GM12878 (cell line): ENCODE measurements at regions of chr6 and their contacts with region 1.

Region 1: GRCh38 chr6:80637312-80637711 is 530.8 kb downstream of the BCKDHB start:
- DNase-seq: no peak
- ATAC-seq: no peak
- H3K4me3 ChIP-seq: no peak overlapping the region
- H3K27ac ChIP-seq: no peak overlapping the region
- H3K4me1 ChIP-seq: no peaks in the 10 kb centered on the region
- H3K27me3 ChIP-seq: no peaks in the 10 kb centered on the region
- CTCF ChIP-seq: no peak
- EP300 ChIP-seq: no peak
- POLR2A ChIP-seq: no peak
- RAD21 ChIP-seq: no peak

Region 2: DNA sequence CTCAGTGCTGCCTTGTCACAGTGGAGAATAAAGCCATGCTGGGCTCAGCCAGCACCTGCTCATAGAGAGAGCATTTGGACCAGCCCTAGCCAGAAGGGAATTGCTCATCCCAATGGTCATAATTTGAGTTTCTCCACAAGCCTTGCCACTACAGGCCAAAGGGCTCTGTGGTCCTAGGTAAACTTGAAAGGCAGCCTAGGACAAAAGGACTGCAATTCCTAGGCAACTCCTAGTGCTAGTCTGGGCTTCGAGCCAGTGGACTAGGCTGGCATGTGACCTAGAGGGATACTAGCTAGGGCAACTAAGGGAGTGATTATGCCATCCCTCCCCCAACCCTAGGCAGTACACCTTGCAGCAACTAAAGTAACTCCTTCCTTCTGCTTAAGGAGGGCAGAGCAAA is 14.7 kb before region 1 on chr6:
- CTCF ChIA-PET with region 1: interaction called, 3 read pairs
- POLR2A ChIA-PET with region 1: no interaction called
- RAD21 ChIA-PET with region 1: no interaction called
- SMC1A ChIA-PET with region 1: interaction called, 3 read pairs
- in situ Hi-C with region 1: no loop called
- intact Hi-C with region 1: loop called (anchors 1 kb)
- DNase-seq: no peak
- ATAC-seq: no peak
- H3K4me3 ChIP-seq: no peak overlapping the region
- H3K27ac ChIP-seq: no peak overlapping the region
- H3K4me1 ChIP-seq: no peaks in the 10 kb centered on the region
- H3K27me3 ChIP-seq: no peaks in the 10 kb centered on the region
- CTCF ChIP-seq: no peak
- EP300 ChIP-seq: no peak
- POLR2A ChIP-seq: no peak
- RAD21 ChIP-seq: no peak